Keratinocyte (primary cell): ENCODE measurements at regions of chr3 and their contacts with region 1.

Region 1: DNA sequence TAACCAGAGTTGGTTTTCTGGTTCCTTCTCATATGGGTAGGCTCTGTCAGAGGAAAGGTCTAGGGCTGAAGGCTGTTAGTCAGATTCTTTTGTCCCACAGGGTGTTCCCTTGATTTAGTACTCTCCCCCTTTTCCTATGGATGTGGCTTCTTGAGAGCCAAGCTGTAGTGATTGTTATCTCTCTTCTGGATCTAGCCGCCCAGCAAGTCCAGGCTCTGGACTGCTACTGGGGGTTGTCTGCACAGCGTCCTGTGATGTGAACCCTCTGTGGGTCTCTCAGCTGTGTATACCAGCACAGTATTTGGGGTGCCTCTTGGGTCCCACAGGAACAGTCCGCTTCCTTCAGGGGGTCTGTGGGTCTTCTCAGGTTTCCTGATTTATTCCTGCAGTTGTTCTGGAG is 70.8 kb downstream of the PPP2R3A start:
- DNase-seq: no peak
- H3K4me3 ChIP-seq: no peak overlapping the region
- H3K27ac ChIP-seq: no peak overlapping the region
- H3K4me1 ChIP-seq: no peaks in the 10 kb centered on the region
- H3K27me3 ChIP-seq: no peaks in the 10 kb centered on the region
- CTCF ChIP-seq: no peak

Region 2: DNA sequence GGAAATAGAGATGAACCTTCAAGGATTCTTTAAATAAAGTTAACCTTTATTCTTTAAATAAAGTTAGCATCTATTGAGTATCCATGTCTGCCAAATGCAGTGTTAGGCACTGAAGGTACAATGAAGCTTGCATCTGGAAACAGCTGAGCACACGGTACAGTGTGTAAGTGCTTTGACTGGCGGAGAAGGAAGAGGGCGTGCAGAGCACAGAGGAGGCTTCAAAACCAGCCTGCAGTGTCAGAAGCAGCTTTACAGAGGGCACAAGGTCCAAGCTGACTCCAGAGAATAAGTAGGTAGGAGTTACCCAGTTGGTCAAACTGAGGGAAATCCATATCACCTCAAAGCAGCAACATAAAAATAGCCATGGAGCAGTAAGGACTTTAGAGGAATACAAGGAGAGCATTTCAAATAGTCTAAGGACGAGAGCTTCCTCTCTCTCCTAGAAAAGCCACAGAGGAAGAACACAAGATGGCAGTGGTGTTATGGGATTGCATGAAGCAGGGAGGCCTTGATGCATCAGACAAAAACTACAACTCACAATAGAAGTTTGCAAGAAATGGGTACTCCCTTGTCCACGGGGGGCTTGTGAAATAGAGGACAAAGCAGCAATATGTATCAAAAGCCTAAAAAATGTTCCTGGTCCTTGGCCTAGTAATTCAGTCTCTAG is 131.1 kb before region 1 on chr3:
- dilution Hi-C with region 1: loop called (anchors 5 kb)
- DNase-seq: no peak
- H3K4me3 ChIP-seq: no peak overlapping the region
- H3K27ac ChIP-seq: no peak overlapping the region
- H3K4me1 ChIP-seq: peaks cover 24% of the 10 kb centered on the region
- H3K27me3 ChIP-seq: no peaks in the 10 kb centered on the region
- CTCF ChIP-seq: peak; percentile 53 to 70 (median 63)